ENCODE measurements at regions of chr1 and their contacts with region 1.

Region 1: DNA sequence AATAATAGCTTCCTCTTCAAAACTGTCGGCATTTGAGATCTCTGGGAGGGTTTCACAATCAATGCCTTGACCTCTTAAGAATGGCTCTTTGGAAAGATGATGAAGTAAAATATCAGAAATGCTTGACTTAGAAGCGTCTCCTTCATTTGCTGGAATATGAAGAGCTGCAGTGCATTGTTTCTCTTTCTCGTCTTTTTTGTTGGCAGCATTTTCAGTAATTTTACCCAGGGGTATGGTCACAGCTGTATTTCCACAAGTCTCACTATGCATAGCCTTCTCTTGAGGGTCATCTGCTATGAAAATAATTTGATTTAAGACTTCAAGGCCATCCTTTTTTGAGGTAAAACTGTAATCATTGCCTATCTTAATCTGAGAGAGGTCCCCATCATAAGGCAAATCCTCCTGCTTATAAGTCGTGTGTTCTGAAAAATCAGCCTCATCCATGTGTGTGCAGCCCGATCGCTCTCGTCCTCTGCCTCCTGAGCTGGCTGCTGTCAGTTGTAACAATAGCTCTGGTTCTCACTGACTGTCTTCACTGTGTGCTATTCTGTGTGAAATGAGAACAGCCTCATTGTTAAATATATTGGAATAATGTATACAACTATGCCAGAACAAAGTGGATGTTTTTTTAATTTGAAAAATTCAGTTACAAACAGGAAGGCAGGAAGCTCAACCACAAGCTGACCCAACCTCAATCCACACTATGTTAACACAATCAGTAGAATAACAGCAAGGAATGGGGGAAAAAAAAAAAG is 4.5 kb downstream of the AKNAD1 start:
- DNase-seq: no peak
- ATAC-seq: no peak
- H3K4me3 Mint-ChIP-seq: no peak overlapping the region
- H3K27ac Mint-ChIP-seq: no peak overlapping the region
- H3K4me1 Mint-ChIP-seq: peaks cover 7% of the 10 kb centered on the region
- H3K27me3 Mint-ChIP-seq: peaks cover 9% of the 10 kb centered on the region

Region 2: GRCh38 chr1:107609808-107610207 is 1242.6 kb before region 1 on chr1:
- CTCF ChIA-PET with region 1: no interaction called
- POLR2A ChIA-PET with region 1: interaction called, 11 read pairs
- intact Hi-C with region 1: no loop called
- DNase-seq: no peak
- ATAC-seq: no peak
- H3K4me3 Mint-ChIP-seq: no peak overlapping the region
- H3K27ac Mint-ChIP-seq: no peak overlapping the region
- H3K4me1 Mint-ChIP-seq: no peaks in the 10 kb centered on the region
- H3K27me3 Mint-ChIP-seq: no peaks in the 10 kb centered on the region

Measured in activated CD4-positive, alpha-beta T cell treated with anti-CD3 and anti-CD28 coated beads for 36 hours (primary cell).